ENCODE measurements at regions of chr13 and their contacts with region 1.

Region 1: GRCh38 chr13:75357576-75358289 is 124.2 kb downstream of the TBC1D4 start:
- DNase-seq: no peak
- ATAC-seq: peak; percentile 95
- H3K4me3 ChIP-seq: no peak overlapping the region
- H3K27ac ChIP-seq: no peak overlapping the region
- H3K4me1 ChIP-seq: no peaks in the 10 kb centered on the region
- H3K27me3 ChIP-seq: no peaks in the 10 kb centered on the region
- CTCF ChIP-seq: peak; percentile 64 to 83 (median 75)
- EP300 ChIP-seq: no peak
- POLR2A ChIP-seq: no peak
- RAD21 ChIP-seq: peak; percentile 66

Region 2: GRCh38 chr13:75258159-75258782 is 99.5 kb before region 1 on chr13:
- CTCF ChIA-PET with region 1: interaction called, 17 read pairs
- POLR2A ChIA-PET with region 1: no interaction called
- RAD21 ChIA-PET with region 1: interaction called, 3 read pairs
- SMC1A ChIA-PET with region 1: interaction called, 7 read pairs
- in situ Hi-C with region 1: no loop called
- intact Hi-C with region 1: no loop called
- DNase-seq: no peak
- ATAC-seq: peak; percentile 82
- H3K4me3 ChIP-seq: no peak overlapping the region
- H3K27ac ChIP-seq: no peak overlapping the region
- H3K4me1 ChIP-seq: no peaks in the 10 kb centered on the region
- H3K27me3 ChIP-seq: 0 out of 4 replicates have a peak, but pooled peaks cover 0 to 3% of the 10 kb centered on the region in 2 experiments
- CTCF ChIP-seq: peak; percentile 39 to 56 (median 53); a peak in 4 of 6 replicates
- EP300 ChIP-seq: no peak
- POLR2A ChIP-seq: no peak
- RAD21 ChIP-seq: peak; percentile 56

Region 3: DNA sequence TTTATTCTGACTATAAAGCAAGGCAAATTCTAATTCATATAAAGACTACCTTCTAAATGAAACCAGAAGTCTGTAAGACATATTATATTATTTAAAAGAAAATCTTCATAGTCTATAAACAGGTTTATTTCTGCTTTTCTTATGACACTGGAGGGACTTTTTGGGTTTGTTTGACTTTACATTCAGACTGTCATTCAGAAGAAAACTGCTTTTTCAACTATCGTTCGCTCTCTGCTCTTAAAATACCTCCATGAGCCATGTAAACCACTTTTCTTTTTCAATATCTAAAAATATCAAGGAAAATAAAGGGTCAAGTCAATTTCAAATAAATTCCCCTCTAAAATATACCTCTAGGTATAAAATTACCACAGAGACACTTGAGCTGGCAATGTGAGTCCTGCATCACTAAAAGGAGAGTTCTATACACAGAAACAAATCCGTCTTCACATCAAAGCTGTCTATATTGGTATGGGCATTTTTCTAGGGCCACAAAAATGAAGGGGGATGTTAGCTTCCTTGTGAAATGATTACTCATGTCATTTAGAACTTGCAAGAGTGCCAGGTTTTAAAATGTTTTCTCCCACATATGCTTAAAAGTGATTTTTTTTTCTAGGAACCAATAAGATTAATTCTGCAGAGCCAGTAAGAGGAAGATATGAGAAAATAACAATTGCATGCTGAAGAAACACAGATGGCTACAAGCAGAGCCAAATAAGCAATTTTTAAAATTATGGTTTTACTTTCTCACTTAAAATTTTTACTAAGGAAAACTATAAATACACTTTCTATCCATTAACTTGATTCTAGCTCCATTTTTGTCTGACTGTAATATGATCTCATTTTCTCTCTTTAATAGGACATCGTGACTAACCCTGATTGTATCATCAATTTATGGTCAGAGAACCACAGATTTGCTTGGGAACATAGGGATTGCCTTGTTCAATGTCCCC is 57.5 kb before region 1 on chr13:
- CTCF ChIA-PET with region 1: interaction called, 13 read pairs
- POLR2A ChIA-PET with region 1: interaction called, 4 read pairs
- RAD21 ChIA-PET with region 1: interaction called, 6 read pairs
- SMC1A ChIA-PET with region 1: interaction called, 7 read pairs
- in situ Hi-C with region 1: no loop called
- intact Hi-C with region 1: loop called (anchors 2 kb)
- DNase-seq: peak; percentile 67
- ATAC-seq: peak; percentile 80
- H3K4me3 ChIP-seq: no peak overlapping the region
- H3K27ac ChIP-seq: peak overlapping the region; percentile 78
- H3K4me1 ChIP-seq: peaks cover 12% of the 10 kb centered on the region
- H3K27me3 ChIP-seq: no peaks in the 10 kb centered on the region
- CTCF ChIP-seq: no peak
- EP300 ChIP-seq: peak; percentile 62 to 71; a peak in 3 of 4 replicates
- POLR2A ChIP-seq: no peak
- RAD21 ChIP-seq: no peak

Region 4: GRCh38 chr13:75410207-75410606 is 52.5 kb after region 1 on chr13:
- CTCF ChIA-PET with region 1: no interaction called
- POLR2A ChIA-PET with region 1: no interaction called
- RAD21 ChIA-PET with region 1: no interaction called
- SMC1A ChIA-PET with region 1: no interaction called
- in situ Hi-C with region 1: no loop called
- intact Hi-C with region 1: no loop called
- DNase-seq: no peak
- ATAC-seq: no peak; the same call in 2 of the 3 replicates
- H3K4me3 ChIP-seq: no peak overlapping the region
- H3K27ac ChIP-seq: no peak overlapping the region
- H3K4me1 ChIP-seq: peaks cover 9% of the 10 kb centered on the region
- H3K27me3 ChIP-seq: no peaks in the 10 kb centered on the region
- CTCF ChIP-seq: no peak
- EP300 ChIP-seq: no peak
- POLR2A ChIP-seq: no peak
- RAD21 ChIP-seq: no peak